ENCODE measurements at regions of chr3 and their contacts with region 1.

Region 1: DNA sequence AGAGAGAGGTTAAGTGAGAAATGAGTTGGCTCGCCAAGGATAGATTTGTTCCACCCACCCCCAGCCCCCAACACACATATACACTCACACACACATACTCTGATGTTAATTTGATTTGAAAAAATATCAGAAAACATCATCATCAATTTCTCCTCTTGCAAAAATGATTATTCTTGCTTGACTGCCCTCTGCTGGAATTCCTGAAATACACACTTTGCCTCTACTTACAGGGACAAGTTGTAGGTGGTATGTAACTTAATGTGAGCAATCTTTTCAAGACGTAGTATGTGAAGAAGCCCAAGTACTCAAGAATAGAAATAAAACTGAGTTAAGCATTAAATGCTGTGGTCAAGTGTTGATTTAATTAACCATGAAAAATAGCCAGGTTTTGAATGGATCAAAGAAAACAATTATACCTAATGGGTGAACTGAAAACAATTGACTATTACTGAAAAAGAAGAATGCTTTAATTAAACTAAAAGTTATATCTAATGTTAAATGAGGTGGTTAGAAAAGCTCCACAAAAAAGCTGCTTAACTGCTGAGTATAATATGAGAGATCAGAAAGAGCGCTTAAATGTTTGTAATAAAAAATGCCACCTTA is 46.6 kb upstream of the MDFIC2 start:
- DNase-seq: no peak
- CTCF ChIP-seq: peak; percentile 39

Region 2: GRCh38 chr3:70120357-70121121 is 238.5 kb before region 1 on chr3:
- in situ Hi-C with region 1: loop called (anchors 10 kb)
- DNase-seq: peak; percentile 74
- CTCF ChIP-seq: peak; percentile 92

Region 3: DNA sequence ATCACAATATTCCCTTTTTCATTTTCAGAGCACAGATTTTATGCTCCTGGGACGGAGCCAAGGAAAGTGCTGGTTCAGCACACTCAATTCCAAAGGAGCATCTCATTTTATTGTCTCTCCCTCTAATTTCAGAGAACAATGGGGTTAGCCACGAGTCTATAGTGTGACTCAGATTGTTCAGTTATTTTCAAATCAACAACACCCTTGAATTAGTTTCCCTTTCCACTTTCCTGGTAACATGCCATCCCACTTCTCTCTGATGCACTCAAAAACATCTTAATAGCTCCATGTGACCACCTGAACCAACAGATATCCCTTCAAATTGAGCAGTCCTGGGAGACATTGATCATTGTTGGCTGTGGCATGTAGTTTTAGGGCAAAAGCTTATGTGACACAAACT is 343.1 kb after region 1 on chr3:
- in situ Hi-C with region 1: no loop called
- DNase-seq: no peak
- CTCF ChIP-seq: no peak